ENCODE measurements at regions of chr9 and their contacts with region 1.

Region 1: GRCh38 chr9:4077499-4078102 is 222.3 kb downstream of the GLIS3 start:
- DNase-seq: peak; percentile 74 to 85
- ATAC-seq: peak in 7 of 8 donors; percentile 78 to 95 (median 88)
- H3K4me3 ChIP-seq: no peak overlapping the region
- H3K27ac ChIP-seq: peak overlapping the region in 2 of 10 donors; percentile 23 to 32
- H3K4me1 ChIP-seq: peaks cover 0 to 11% (median 5%) of the 10 kb centered on the region in 9 donors
- H3K27me3 ChIP-seq: no peaks in the 10 kb centered on the region
- CTCF ChIP-seq: peak; percentile 24 to 70 (median 66)

Region 2: GRCh38 chr9:3662671-3663070 is 414.9 kb before region 1 on chr9:
- intact Hi-C with region 1: no loop called
- DNase-seq: no peak
- ATAC-seq: no peak
- H3K4me3 ChIP-seq: no peak overlapping the region
- H3K27ac ChIP-seq: no peak overlapping the region
- H3K4me1 ChIP-seq: no peaks in the 10 kb centered on the region
- H3K27me3 ChIP-seq: no peaks in the 10 kb centered on the region
- CTCF ChIP-seq: no peak

Region 3: DNA sequence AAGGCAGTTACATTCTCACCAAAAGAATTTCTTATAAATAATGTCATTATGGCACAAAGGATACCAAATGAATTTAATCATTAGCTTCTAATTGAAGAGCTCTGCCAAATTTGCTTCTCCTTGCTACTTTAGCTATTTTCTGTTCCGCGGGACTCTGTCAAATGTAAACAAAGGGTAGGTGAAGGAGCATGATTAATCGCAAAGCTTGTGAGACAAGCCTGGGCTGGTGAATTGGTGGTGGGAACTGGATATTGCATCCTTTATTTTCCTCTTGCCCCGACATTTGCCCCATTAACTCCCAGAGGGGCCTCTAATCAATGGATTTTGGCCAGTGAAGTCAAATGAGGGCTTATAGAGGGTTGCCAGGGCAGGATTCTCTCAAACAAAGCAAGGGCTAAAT is 317.6 kb before region 1 on chr9:
- intact Hi-C with region 1: loop called in 1 of 10 experiments (anchors 10 kb)
- DNase-seq: no peak
- ATAC-seq: no peak
- H3K4me3 ChIP-seq: no peak overlapping the region
- H3K27ac ChIP-seq: no peak overlapping the region
- H3K4me1 ChIP-seq: peaks cover 0 to 7% (median 0%) of the 10 kb centered on the region in 9 donors
- H3K27me3 ChIP-seq: no peaks in the 10 kb centered on the region
- CTCF ChIP-seq: no peak

Region 4: GRCh38 chr9:4137234-4137633 is 59.6 kb after region 1 on chr9:
- intact Hi-C with region 1: loop called in 1 of 10 experiments (anchors 10 kb)
- DNase-seq: no peak
- ATAC-seq: peak in 2 of 8 donors; percentile 41 to 55
- H3K4me3 ChIP-seq: no peak overlapping the region
- H3K27ac ChIP-seq: peak overlapping the region in 1 of 10 donors; percentile 55
- H3K4me1 ChIP-seq: peaks cover 0 to 27% (median 4%) of the 10 kb centered on the region in 9 donors
- H3K27me3 ChIP-seq: no peaks in the 10 kb centered on the region
- CTCF ChIP-seq: no peak

Region 5: GRCh38 chr9:4228606-4229005 is 151.0 kb after region 1 on chr9:
- intact Hi-C with region 1: loop called in 5 of 10 experiments (anchors 5 to 10 kb)
- DNase-seq: no peak
- ATAC-seq: peak in 4 of 8 donors; percentile 62 to 75 (median 68)
- H3K4me3 ChIP-seq: no peak overlapping the region
- H3K27ac ChIP-seq: no peak overlapping the region
- H3K4me1 ChIP-seq: peaks cover 0 to 22% (median 0%) of the 10 kb centered on the region in 9 donors
- H3K27me3 ChIP-seq: no peaks in the 10 kb centered on the region
- CTCF ChIP-seq: peak; percentile 25 to 73 (median 56)

Region 6: DNA sequence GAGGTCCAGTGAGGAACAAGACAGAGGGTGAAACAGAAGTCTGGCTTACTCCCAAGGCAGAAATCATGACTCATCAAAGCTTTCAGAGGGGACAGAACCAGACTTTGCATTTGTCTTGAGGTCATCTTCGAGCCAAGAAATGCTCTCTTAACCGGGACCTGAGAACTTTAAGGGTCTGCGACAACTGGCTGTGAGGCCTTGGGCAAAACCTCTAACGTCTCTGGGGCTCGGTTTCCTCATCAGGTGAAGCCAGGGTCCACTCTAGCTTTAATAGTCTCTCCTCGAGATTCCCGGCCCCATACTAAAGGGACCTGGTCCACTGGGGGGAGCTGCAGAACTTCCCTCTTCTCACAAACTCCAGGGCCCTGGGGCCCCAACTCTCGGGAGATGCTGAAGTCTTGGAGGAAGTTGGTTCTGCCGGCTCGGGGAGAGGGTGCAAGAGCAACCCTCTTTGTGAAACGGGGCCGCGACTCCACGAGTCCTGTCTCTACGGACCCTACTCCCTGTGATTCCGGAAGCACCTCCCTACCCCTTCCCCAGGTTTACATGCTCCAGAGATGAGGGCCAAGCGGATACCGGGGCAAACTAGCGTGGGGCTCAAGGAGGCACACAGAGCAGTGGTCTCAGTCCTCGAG is 219.7 kb after region 1 on chr9:
- intact Hi-C with region 1: loop called in 2 of 10 experiments (anchors 10 kb)
- DNase-seq: peak; percentile 58 to 74
- ATAC-seq: peak; percentile 24 to 76 (median 57)
- H3K4me3 ChIP-seq: peak overlapping the region; percentile 58 to 79 (median 75)
- H3K27ac ChIP-seq: peak overlapping the region; percentile 55 to 93 (median 82)
- H3K4me1 ChIP-seq: peaks cover 0 to 60% (median 10%) of the 10 kb centered on the region in 9 donors
- H3K27me3 ChIP-seq: peaks cover 0 to 27% (median 0%) of the 10 kb centered on the region in 7 donors
- CTCF ChIP-seq: peak in 8 of 9 donors; percentile 8 to 63 (median 44)

Region 7: GRCh38 chr9:4339357-4339756 is 261.8 kb after region 1 on chr9:
- intact Hi-C with region 1: loop called in 1 of 10 experiments (anchors 10 kb)
- DNase-seq: peak; percentile 79 to 81
- ATAC-seq: peak in 7 of 8 donors; percentile 49 to 85 (median 68)
- H3K4me3 ChIP-seq: no peak overlapping the region
- H3K27ac ChIP-seq: no peak overlapping the region
- H3K4me1 ChIP-seq: peaks cover 0 to 9% (median 3%) of the 10 kb centered on the region in 9 donors
- H3K27me3 ChIP-seq: no peaks in the 10 kb centered on the region
- CTCF ChIP-seq: peak; percentile 81 to 95 (median 92)